Psoas muscle (tissue), 8 donors: ENCODE measurements at regions of chr9 and their contacts with region 1.

Region 1: GRCh38 chr9:69054989-69055388 is 19.4 kb downstream of the FXN start:
- DNase-seq: no peak
- ATAC-seq: no peak
- H3K4me3 ChIP-seq: no peak overlapping the region
- H3K27ac ChIP-seq: no peak overlapping the region
- H3K4me1 ChIP-seq: no peaks in the 10 kb centered on the region
- H3K27me3 ChIP-seq: no peaks in the 10 kb centered on the region
- CTCF ChIP-seq: no peak

Region 2: DNA sequence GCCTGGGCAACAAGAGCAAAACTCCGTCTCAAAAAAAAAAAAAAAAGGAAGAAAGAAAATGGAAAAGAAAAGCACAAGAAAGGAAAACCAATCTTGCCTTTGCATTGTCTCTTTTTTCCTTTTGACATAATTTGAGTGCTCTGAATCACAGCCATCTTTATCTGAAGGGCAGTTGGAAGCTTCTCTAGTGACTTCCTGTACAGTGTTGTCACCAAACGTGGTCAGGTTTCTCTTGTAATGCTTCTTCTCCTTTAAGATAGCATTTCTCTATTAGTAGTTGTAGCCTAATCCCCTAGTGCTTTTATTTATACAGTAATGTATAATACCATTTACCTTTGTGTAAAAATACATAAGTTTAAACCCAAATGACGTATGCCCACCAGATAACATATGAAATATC is 59.2 kb before region 1 on chr9:
- intact Hi-C with region 1: no loop called
- DNase-seq: no peak
- ATAC-seq: no peak
- H3K4me3 ChIP-seq: no peak overlapping the region
- H3K27ac ChIP-seq: no peak overlapping the region
- H3K4me1 ChIP-seq: no peaks in the 10 kb centered on the region
- H3K27me3 ChIP-seq: no peaks in the 10 kb centered on the region
- CTCF ChIP-seq: no peak

Region 3: GRCh38 chr9:69193685-69194032 is 138.7 kb after region 1 on chr9:
- intact Hi-C with region 1: loop called (anchors 1 to 5 kb)
- DNase-seq: no peak
- ATAC-seq: peak in 1 of 4 donors; percentile 38
- H3K4me3 ChIP-seq: no peak overlapping the region
- H3K27ac ChIP-seq: no peak overlapping the region
- H3K4me1 ChIP-seq: peaks cover 24% of the 10 kb centered on the region
- H3K27me3 ChIP-seq: no peaks in the 10 kb centered on the region
- CTCF ChIP-seq: no peak